GM10248 (cell line): ENCODE measurements at regions of chr11 and their contacts with region 1.

Region 1: GRCh38 chr11:112016765-112017356 is 8.3 kb upstream of the DLAT start:
- DNase-seq: no peak
- CTCF ChIP-seq: no peak

Region 2: GRCh38 chr11:111777094-111778046 is 239.5 kb before region 1 on chr11:
- CTCF ChIA-PET with region 1: no interaction called
- POLR2A ChIA-PET with region 1: no interaction called
- DNase-seq: peak; percentile 62
- CTCF ChIP-seq: peak; percentile 63

Region 3: DNA sequence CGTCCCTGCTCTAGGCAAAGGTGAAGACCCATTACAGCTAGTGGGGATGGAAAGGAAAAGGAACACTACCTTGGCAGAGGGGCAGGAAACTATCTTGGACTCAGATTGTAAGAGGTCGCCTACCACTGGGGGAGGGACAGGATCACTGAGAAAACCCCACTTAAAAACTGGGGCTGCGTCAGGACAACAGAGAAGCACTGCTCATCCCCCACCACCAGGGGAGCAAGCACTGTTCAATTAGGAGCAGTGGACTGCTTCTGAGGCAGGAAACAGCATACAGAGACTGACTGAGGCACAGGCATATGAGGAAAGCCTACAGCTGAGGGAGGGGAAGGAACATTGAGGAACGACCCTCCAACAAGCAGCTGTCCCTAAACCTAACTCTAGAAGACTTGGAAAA is 12.5 kb before region 1 on chr11:
- CTCF ChIA-PET with region 1: interaction called, 18 read pairs
- POLR2A ChIA-PET with region 1: interaction called, 3 read pairs
- DNase-seq: peak; percentile 71
- CTCF ChIP-seq: peak; percentile 65